Esophagus muscularis mucosa (tissue), 4 donors: ENCODE measurements at regions of chr11 and their contacts with region 1.

Region 1: GRCh38 chr11:17063171-17064002 is 14.1 kb downstream of the RPS13 start:
- DNase-seq: no peak
- H3K4me3 ChIP-seq: no peak overlapping the region
- H3K27ac ChIP-seq: no peak overlapping the region
- H3K4me1 ChIP-seq: no peaks in the 10 kb centered on the region
- H3K27me3 ChIP-seq: no peaks in the 10 kb centered on the region
- CTCF ChIP-seq: peak; percentile 49 to 70 (median 54)
- EP300 ChIP-seq: no peak
- POLR2A ChIP-seq: no peak

Region 2: GRCh38 chr11:16785520-16786128 is 277.8 kb before region 1 on chr11:
- intact Hi-C with region 1: loop called (anchors 10 kb)
- DNase-seq: no peak
- H3K4me3 ChIP-seq: no peak overlapping the region
- H3K27ac ChIP-seq: no peak overlapping the region
- H3K4me1 ChIP-seq: peaks cover 0 to 40% (median 16%) of the 10 kb centered on the region in 4 donors
- H3K27me3 ChIP-seq: no peaks in the 10 kb centered on the region
- CTCF ChIP-seq: peak; percentile 79 to 94 (median 82)
- EP300 ChIP-seq: no peak
- POLR2A ChIP-seq: no peak

Region 3: DNA sequence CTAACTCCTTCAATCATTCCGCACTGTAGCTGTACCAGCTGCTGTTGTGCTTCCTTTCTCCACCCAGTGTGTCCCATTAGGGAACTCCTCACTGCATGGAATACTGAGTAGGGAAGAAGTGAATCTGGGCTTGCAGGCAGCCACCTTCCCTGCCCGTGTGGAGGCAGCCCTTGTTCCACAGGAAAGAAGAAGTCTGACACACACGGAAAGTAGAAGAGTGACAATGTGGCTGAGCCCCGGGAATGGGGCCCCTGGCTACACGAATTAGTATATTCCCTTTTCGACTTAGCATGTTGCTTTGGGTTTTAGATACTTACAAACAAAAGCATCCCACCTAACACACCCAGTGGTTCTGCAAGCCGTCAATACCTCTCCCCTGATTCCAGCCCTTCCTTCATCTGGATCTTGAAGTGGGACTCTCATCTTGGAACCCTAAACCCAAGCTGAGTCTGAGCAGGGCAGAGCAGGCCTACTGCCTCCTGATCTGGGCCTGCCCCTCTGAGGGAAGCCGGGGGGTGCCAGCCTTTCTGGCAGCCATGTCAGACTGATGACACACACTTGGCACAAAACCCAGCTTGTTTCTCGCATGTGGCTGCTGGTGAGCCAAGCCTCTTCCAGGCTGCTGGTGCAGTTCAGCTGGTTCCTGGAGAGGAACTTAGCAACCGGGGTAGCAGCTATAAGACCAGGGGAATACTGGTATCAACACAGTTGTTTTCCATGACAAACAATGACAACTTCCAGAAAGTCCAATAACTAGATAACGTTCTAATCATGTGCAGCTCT is 253.3 kb before region 1 on chr11:
- intact Hi-C with region 1: loop called (anchors 10 kb)
- DNase-seq: no peak
- H3K4me3 ChIP-seq: no peak overlapping the region
- H3K27ac ChIP-seq: peak overlapping the region in 1 of 4 donors; percentile 28
- H3K4me1 ChIP-seq: peaks cover 38 to 53% (median 42%) of the 10 kb centered on the region in 4 donors
- H3K27me3 ChIP-seq: no peaks in the 10 kb centered on the region
- CTCF ChIP-seq: no peak
- EP300 ChIP-seq: no peak
- POLR2A ChIP-seq: no peak

Region 4: GRCh38 chr11:16945671-16946469 is 117.5 kb before region 1 on chr11:
- intact Hi-C with region 1: loop called (anchors 2 kb)
- DNase-seq: no peak
- H3K4me3 ChIP-seq: no peak overlapping the region
- H3K27ac ChIP-seq: no peak overlapping the region
- H3K4me1 ChIP-seq: peaks cover 0 to 3% (median 0%) of the 10 kb centered on the region in 4 donors
- H3K27me3 ChIP-seq: no peaks in the 10 kb centered on the region
- CTCF ChIP-seq: peak in 2 of 3 experiments; percentile 28 to 55
- EP300 ChIP-seq: no peak
- POLR2A ChIP-seq: no peak

Region 5: DNA sequence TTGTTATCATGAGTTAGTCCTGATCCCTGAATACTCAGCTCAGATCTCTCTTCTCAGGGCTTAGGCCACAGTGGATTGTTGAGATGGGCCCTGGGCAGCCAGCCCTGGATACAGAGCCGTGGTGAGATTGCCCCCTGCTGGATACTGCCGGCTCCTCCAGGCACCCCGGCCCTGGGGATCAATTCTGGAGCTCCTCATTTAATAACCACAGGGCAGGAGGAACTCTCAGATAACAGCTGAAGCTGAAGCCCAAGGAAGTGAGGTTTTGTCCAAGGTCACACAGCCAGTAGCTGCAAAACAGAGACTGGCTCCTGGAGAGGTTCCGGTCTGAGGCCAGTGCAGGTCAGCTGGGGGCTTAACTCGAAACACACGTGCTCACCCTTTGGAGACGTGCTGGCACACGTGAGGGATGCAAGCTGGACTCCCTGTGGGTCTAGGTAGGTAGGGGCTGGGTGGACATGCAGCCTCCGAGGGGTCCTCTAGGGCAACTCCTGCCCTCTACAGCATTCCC is 464.8 kb after region 1 on chr11:
- intact Hi-C with region 1: no loop called
- DNase-seq: no peak
- H3K4me3 ChIP-seq: no peak overlapping the region
- H3K27ac ChIP-seq: no peak overlapping the region
- H3K4me1 ChIP-seq: no peaks in the 10 kb centered on the region
- H3K27me3 ChIP-seq: peaks cover 0 to 10% (median 0%) of the 10 kb centered on the region in 4 donors
- CTCF ChIP-seq: peak; percentile 52 to 68 (median 60)
- EP300 ChIP-seq: no peak
- POLR2A ChIP-seq: no peak